ENCODE measurements at regions of chr3 and their contacts with region 1.

Region 1: GRCh38 chr3:72996473-72997333 is at the start of gene PPP4R2:
- DNase-seq: peak; percentile 94
- ATAC-seq: peak; percentile 86
- H3K4me3 ChIP-seq: peak within 1 kb of the TSS; percentile 84 to 96 (median 91)
- H3K4me3 Mint-ChIP-seq: peak within 1 kb of the TSS; percentile 90
- H3K27ac ChIP-seq: peak within 1 kb of the TSS; percentile 92
- H3K27ac Mint-ChIP-seq: peak within 1 kb of the TSS; percentile 84
- H3K4me1 ChIP-seq: peaks cover 30 to 33% of the 10 kb centered on the region in 2 donors
- H3K4me1 Mint-ChIP-seq: peaks cover 36% of the 10 kb centered on the region
- H3K27me3 ChIP-seq: no peaks in the 10 kb centered on the region
- H3K27me3 Mint-ChIP-seq: no peaks in the 10 kb centered on the region
- CTCF ChIP-seq: no peak
- total RNA-seq, gene PPP4R2: 57.5 and 64.3 TPM in 2 replicates

Region 2: DNA sequence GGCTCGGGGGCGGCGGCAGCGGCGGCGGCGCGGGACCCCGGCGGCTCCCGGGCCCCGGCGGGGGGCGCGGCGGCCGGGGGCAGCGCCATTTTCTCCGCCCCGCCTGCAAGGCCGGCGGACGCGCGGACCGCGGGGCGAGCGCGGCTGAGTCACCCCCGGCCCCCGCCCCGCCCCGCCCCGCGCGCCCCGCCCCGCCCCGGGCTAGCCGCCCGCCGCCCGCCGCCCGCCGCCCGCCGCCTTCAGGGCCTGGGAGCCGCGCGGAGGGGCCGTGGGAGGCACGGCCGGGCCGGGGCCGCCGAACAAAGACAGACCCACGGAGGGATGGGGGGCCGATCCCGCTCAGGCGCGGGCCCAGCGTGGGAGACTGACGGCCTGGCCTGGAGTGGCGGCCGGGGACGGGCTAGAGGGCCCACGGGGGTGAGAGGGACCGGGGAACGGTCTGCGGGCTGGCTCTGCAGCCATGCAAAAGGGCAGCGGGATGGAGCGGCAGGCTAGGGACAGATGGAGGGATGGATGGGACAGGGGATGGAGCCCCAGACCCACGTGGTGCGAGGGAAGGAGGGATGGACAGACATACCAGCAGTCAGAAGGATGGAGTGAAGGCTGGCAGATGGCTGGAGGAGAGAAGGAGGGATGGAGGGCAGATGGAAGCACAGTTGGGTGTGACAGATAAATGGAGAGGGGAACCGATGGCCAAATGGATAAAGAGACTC is 1271.3 kb before region 1 on chr3 and contains the start of gene EIF4E3:
- CTCF ChIA-PET with region 1: no interaction called
- POLR2A ChIA-PET with region 1: no interaction called
- intact Hi-C with region 1: loop called (anchors 10 kb)
- DNase-seq: peak; percentile 51
- ATAC-seq: peak; percentile 73
- H3K4me3 ChIP-seq: peak within 1 kb of the TSS; percentile 59 to 71 (median 68)
- H3K4me3 Mint-ChIP-seq: peak within 1 kb of the TSS; percentile 82
- H3K27ac ChIP-seq: no peak within 1 kb of the TSS
- H3K27ac Mint-ChIP-seq: peak within 1 kb of the TSS; percentile 43
- H3K4me1 ChIP-seq: peaks cover 29% of the 10 kb centered on the region in 2 donors
- H3K4me1 Mint-ChIP-seq: peaks cover 43% of the 10 kb centered on the region
- H3K27me3 ChIP-seq: peaks cover 0 to 27% (median 0%) of the 10 kb centered on the region in 4 experiments
- H3K27me3 Mint-ChIP-seq: peaks cover 8% of the 10 kb centered on the region
- CTCF ChIP-seq: no peak
- total RNA-seq, gene EIF4E3: 4.2 and 5.0 TPM in 2 replicates

Region 3: DNA sequence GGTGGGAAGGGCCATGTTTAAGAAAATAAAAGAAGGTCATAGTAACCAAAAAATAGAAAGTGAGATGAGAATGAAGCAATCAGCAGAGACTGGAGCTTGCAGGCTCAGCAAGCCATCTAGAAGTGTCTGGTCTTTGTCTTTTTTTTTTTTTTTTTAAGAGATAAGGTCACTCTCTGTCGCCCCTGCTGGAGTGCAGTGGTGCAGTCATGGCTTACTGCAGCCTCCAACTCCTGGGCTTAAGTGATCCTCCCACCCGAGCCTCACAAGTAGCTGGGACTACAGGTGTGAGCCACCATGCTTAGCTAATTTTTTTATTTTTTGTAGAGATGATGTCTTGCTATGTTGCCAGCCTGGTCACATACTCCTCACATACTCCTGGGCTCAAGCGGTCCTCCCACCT is 72.6 kb before region 1 on chr3:
- CTCF ChIA-PET with region 1: no interaction called
- POLR2A ChIA-PET with region 1: no interaction called
- intact Hi-C with region 1: no loop called
- DNase-seq: no peak
- ATAC-seq: no peak
- H3K4me3 ChIP-seq: no peak overlapping the region
- H3K4me3 Mint-ChIP-seq: no peak overlapping the region
- H3K27ac ChIP-seq: no peak overlapping the region
- H3K27ac Mint-ChIP-seq: no peak overlapping the region
- H3K4me1 ChIP-seq: no peaks in the 10 kb centered on the region
- H3K4me1 Mint-ChIP-seq: no peaks in the 10 kb centered on the region
- H3K27me3 ChIP-seq: no peaks in the 10 kb centered on the region
- H3K27me3 Mint-ChIP-seq: peaks cover 27% of the 10 kb centered on the region
- CTCF ChIP-seq: no peak

Measured in B cell (primary cell).